AG04449 (cell line): ENCODE measurements at regions of chr7 and their contacts with region 1.

Region 1: GRCh38 chr7:92134271-92135051 is at the start of gene CYP51A1:
- DNase-seq: peak; percentile 63
- H3K4me3 ChIP-seq: peak within 1 kb of the TSS; percentile 89
- CTCF ChIP-seq: peak; percentile 27

Region 2: GRCh38 chr7:91618776-91619765 is 515.4 kb before region 1 on chr7:
- CTCF ChIA-PET with region 1: no interaction called
- POLR2A ChIA-PET with region 1: no interaction called
- DNase-seq: no peak
- H3K4me3 ChIP-seq: no peak overlapping the region
- CTCF ChIP-seq: no peak

Region 3: GRCh38 chr7:91656541-91657482 is 477.6 kb before region 1 on chr7:
- CTCF ChIA-PET with region 1: no interaction called
- POLR2A ChIA-PET with region 1: no interaction called
- DNase-seq: no peak
- H3K4me3 ChIP-seq: no peak overlapping the region
- CTCF ChIP-seq: no peak

Region 4: DNA sequence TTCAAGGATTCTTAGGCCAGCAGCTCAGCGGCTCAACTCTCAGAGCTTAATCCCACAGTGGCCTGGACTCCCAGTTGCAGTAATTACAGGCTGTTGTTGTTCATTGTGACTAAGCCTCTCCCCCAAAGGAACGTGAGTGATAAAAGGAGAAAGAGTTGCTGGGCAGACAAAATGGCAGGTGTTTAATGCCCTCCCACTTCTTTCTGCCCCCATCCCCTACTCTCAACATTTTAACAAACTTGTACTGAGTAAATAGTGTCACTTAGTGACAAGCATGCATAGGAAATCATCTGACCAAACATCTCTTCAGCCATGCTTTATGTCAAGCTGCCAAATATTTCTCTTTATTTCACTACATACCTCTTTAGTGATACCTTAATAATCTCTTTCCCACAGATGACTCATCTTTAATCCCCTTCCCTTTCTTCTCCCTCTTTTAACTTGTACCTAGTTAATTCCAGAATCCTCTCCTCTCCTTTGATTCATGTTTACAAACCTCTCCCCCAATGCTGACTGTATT is 241.6 kb before region 1 on chr7:
- CTCF ChIA-PET with region 1: no interaction called
- POLR2A ChIA-PET with region 1: no interaction called
- DNase-seq: no peak
- H3K4me3 ChIP-seq: no peak overlapping the region
- CTCF ChIP-seq: no peak

Region 5: GRCh38 chr7:92020636-92021035 is 113.8 kb before region 1 on chr7:
- CTCF ChIA-PET with region 1: no interaction called
- POLR2A ChIA-PET with region 1: no interaction called
- DNase-seq: peak; percentile 9
- H3K4me3 ChIP-seq: no peak overlapping the region
- CTCF ChIP-seq: no peak

Region 6: GRCh38 chr7:92119213-92119759 is 15.2 kb before region 1 on chr7:
- CTCF ChIA-PET with region 1: interaction called, 23 read pairs
- POLR2A ChIA-PET with region 1: no interaction called
- DNase-seq: no peak
- H3K4me3 ChIP-seq: no peak overlapping the region
- CTCF ChIP-seq: no peak

Region 7: DNA sequence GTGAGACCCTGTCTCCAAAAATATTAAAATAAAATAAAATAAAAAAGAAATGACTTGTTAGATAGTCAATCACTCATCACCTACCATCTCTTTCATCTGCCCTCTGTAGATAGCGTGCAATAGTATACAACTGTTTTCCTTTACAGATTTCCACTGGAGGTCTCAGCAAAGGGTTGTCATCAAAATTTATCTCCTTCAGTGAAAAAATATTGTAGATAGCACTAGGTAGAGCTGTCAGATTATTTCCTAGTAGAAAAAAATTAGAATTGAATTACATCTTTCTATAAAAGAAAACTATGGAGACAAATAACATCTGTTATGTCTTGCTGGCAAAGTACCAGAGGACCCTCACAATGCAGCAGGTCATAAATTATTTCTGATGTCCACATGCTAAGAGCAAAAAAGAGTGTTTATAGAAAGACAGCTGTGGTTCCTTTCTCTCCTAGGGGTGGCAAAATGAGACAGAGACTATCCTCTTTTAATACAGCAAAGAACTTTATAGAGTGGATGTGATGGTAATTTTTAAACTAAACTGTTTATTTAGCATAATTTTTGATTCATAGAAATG is 16.1 kb after region 1 on chr7:
- CTCF ChIA-PET with region 1: interaction called, 13 read pairs
- POLR2A ChIA-PET with region 1: no interaction called
- DNase-seq: no peak
- H3K4me3 ChIP-seq: no peak overlapping the region
- CTCF ChIP-seq: no peak

Region 8: GRCh38 chr7:92461027-92462003 is 326.9 kb after region 1 on chr7:
- CTCF ChIA-PET with region 1: interaction called, 10 read pairs
- POLR2A ChIA-PET with region 1: no interaction called
- DNase-seq: no peak
- H3K4me3 ChIP-seq: no peak overlapping the region
- CTCF ChIP-seq: peak; percentile 65